ENCODE measurements at regions of chr19 and their contacts with region 1.

Region 1: DNA sequence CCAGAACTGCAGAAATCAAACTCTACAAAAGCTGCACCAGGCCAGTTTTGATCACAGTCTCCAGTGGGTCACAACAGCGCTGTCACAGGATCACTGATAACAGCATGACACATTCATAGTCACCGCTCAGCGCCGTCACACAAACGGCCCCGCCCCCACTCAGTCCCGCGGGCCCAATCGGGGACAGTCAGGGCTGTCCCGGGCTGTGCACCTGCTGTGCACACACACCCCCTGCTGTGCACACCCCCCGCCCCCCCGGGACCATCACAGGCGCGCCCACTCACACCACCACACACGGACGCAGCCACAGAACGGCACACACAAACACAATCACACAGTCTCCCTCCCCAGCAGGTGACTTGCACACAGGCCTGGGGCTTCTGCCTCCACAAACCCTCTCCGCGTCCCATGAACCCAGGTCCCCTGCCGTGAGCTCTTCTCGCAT is 435 bp upstream of the ZNF382 start:
- DNase-seq: peak; percentile 45
- H3K4me3 ChIP-seq: peak overlapping the region; percentile 49 to 67 (median 62)
- H3K27ac ChIP-seq: no peak overlapping the region
- H3K4me1 ChIP-seq: no peaks in the 10 kb centered on the region
- H3K27me3 ChIP-seq: no peaks in the 10 kb centered on the region
- CTCF ChIP-seq: no peak

Region 2: GRCh38 chr19:36497001-36497400 is 107.7 kb before region 1 on chr19:
- CTCF ChIA-PET with region 1: no interaction called
- dilution Hi-C with region 1: loop called (anchors 5 kb)
- in situ Hi-C with region 1: no loop called
- intact Hi-C with region 1: no loop called
- DNase-seq: no peak
- H3K4me3 ChIP-seq: no peak overlapping the region
- H3K27ac ChIP-seq: no peak overlapping the region
- H3K4me1 ChIP-seq: no peaks in the 10 kb centered on the region
- H3K27me3 ChIP-seq: no peaks in the 10 kb centered on the region
- CTCF ChIP-seq: no peak

Region 3: DNA sequence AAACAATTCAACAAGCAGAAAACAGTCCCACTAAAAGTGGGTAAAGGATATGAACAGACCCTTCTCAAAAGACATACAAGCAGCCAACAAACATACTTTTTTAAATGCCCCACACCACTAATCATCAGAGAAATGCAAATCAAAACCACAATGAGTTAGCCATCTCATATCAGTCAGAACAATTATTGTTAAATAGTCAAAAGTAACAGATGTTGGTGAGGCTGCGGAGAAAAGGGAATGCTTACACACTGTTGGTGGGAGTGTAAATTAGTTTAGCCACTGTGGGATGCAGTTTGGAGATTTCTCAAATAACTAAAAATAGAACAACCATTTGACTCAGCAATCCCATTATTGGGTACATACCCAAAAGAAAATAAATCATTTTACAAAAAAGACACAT is 40.3 kb before region 1 on chr19:
- CTCF ChIA-PET with region 1: no interaction called
- dilution Hi-C with region 1: no loop called
- in situ Hi-C with region 1: no loop called
- intact Hi-C with region 1: no loop called
- DNase-seq: no peak
- H3K4me3 ChIP-seq: no peak overlapping the region
- H3K27ac ChIP-seq: no peak overlapping the region
- H3K4me1 ChIP-seq: no peaks in the 10 kb centered on the region
- H3K27me3 ChIP-seq: no peaks in the 10 kb centered on the region
- CTCF ChIP-seq: no peak

Region 4: GRCh38 chr19:36627057-36627456 is 22.4 kb after region 1 on chr19:
- CTCF ChIA-PET with region 1: no interaction called
- dilution Hi-C with region 1: no loop called
- in situ Hi-C with region 1: no loop called
- intact Hi-C with region 1: no loop called
- DNase-seq: no peak
- H3K4me3 ChIP-seq: no peak overlapping the region
- H3K27ac ChIP-seq: no peak overlapping the region
- H3K4me1 ChIP-seq: no peaks in the 10 kb centered on the region
- H3K27me3 ChIP-seq: no peaks in the 10 kb centered on the region
- CTCF ChIP-seq: no peak

Region 5: GRCh38 chr19:36652958-36653357 is 48.3 kb after region 1 on chr19:
- CTCF ChIA-PET with region 1: no interaction called
- dilution Hi-C with region 1: loop called (anchors 5 kb)
- in situ Hi-C with region 1: no loop called
- intact Hi-C with region 1: no loop called
- DNase-seq: no peak
- H3K4me3 ChIP-seq: no peak overlapping the region
- H3K27ac ChIP-seq: no peak overlapping the region
- H3K4me1 ChIP-seq: no peaks in the 10 kb centered on the region
- H3K27me3 ChIP-seq: no peaks in the 10 kb centered on the region
- CTCF ChIP-seq: no peak

Region 6: GRCh38 chr19:36687214-36688056 is 82.8 kb after region 1 on chr19 and contains the start of gene ZNF567:
- CTCF ChIA-PET with region 1: no interaction called
- dilution Hi-C with region 1: no loop called
- in situ Hi-C with region 1: no loop called
- intact Hi-C with region 1: no loop called
- DNase-seq: peak; percentile 96
- H3K4me3 ChIP-seq: peak within 1 kb of the TSS; percentile 75 to 92 (median 90)
- H3K27ac ChIP-seq: peak within 1 kb of the TSS; percentile 69
- H3K4me1 ChIP-seq: no peaks in the 10 kb centered on the region
- H3K27me3 ChIP-seq: no peaks in the 10 kb centered on the region
- CTCF ChIP-seq: peak in 1 of 2 donors; percentile 11
- total RNA-seq, gene ZNF567: 7.3 to 7.5 TPM

Measured in mammary epithelial cell (primary cell).